OCI-LY7 (cell line): ENCODE measurements at regions of chr6 and their contacts with region 1.

Region 1: GRCh38 chr6:16128759-16129622 is at the start of gene MYLIP:
- DNase-seq: peak; percentile 95
- H3K4me3 ChIP-seq: peak within 1 kb of the TSS; percentile 99
- H3K27ac ChIP-seq: peak within 1 kb of the TSS; percentile 72
- H3K4me1 ChIP-seq: peaks cover 27% of the 10 kb centered on the region
- CTCF ChIP-seq: peak; percentile 74
- total RNA-seq, gene MYLIP: 8.5 and 12.4 TPM in 2 replicates

Region 2: GRCh38 chr6:15662326-15663129 is 466.5 kb before region 1 on chr6 and contains the start of gene DTNBP1:
- CTCF ChIA-PET with region 1: no interaction called
- POLR2A ChIA-PET with region 1: interaction called, 4 read pairs
- intact Hi-C with region 1: loop called (anchors 10 kb)
- DNase-seq: peak; percentile 88
- H3K4me3 ChIP-seq: peak within 1 kb of the TSS; percentile 75
- H3K27ac ChIP-seq: peak within 1 kb of the TSS; percentile 48
- H3K4me1 ChIP-seq: peaks cover 39% of the 10 kb centered on the region
- CTCF ChIP-seq: no peak
- total RNA-seq, gene DTNBP1: 9.8 and 10.9 TPM in 2 replicates

Region 3: DNA sequence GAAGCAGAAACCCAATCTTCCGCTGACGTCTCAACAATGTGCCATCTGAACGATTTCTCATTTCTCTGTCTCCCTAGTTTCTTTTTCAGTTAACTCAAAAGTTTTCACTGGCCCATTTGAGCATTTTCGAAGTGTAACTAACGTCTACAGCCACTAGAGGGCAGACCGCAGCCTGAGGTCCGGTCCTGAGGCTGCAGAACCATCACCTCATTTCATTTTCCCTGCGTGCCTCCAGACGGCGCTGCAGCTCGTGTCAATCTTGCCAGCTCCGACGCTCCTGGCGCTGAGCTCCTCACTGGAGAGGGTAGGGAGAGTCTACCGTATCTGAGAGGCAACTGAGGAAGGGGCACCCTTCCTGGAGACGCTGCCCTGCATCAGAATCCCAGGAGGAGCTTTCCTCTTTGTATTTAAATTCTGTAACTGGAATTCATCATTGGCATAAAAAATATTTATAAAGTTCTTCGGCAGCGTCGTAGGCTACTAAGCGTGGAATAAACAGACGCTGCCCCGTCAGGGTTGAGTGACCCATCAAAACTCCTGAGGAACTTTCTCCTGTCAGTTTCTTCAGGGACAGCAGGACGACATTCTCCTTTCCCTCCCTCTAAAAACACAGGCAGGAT is 437.6 kb before region 1 on chr6:
- CTCF ChIA-PET with region 1: interaction called, 5 read pairs
- POLR2A ChIA-PET with region 1: no interaction called
- intact Hi-C with region 1: loop called (anchors 1 kb)
- DNase-seq: peak; percentile 88
- H3K4me3 ChIP-seq: no peak overlapping the region
- H3K27ac ChIP-seq: no peak overlapping the region
- H3K4me1 ChIP-seq: no peaks in the 10 kb centered on the region
- CTCF ChIP-seq: peak; percentile 99

Region 4: DNA sequence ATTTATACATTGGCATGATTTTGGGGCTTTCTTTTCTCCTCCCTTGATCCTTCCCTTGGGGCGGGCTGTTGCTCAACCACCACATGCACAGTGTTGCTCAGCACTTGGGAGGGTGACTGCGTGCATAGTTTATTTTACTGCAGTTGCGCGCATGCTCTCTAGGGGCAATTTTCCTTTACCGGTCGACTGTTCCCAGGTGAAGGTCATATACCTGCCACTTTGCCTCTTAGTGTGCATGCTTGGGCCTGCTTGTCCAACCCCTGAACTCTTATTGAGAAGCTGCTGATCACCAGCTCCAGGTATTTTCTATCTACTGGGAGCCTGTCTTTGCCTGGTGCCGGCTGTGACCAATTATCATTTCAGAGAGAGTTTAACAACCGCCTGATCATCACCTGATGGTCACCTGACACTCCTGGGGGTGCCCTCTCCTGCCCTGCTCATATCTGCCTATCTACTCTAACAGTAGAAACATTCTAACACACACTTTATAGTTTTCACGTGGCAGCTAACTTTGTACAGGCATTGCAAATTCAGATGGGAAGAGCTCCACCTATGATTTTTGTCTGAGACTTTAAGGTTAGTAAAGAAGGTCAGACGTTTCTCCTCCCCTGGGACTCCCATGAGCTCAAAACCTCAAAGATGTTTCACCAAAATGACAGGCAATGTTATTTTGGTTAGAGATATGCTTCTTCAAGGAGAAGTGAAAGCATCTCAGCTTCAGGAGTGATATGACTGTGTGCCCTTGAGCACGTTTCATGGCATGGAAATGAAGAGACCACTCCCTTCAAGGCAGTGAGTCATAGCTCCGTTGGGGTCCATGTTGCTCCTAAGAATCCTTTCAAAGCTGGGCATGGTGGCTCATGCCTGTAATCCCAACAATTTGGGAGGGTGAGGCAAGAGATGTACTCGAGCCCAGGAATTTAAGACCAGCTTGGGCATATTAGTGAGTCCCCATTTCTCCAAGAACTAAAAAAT is 227.6 kb before region 1 on chr6:
- CTCF ChIA-PET with region 1: no interaction called
- POLR2A ChIA-PET with region 1: interaction called, 4 read pairs
- intact Hi-C with region 1: loop called (anchors 1 kb)
- DNase-seq: peak; percentile 90
- H3K4me3 ChIP-seq: peak overlapping the region; percentile 32
- H3K27ac ChIP-seq: peak overlapping the region; percentile 83
- H3K4me1 ChIP-seq: peaks cover 71% of the 10 kb centered on the region
- CTCF ChIP-seq: no peak; the same call in 1 of the 2 replicates

Region 5: GRCh38 chr6:16146527-16146955 is 17.6 kb after region 1 on chr6:
- CTCF ChIA-PET with region 1: interaction called, 7 read pairs
- POLR2A ChIA-PET with region 1: interaction called, 10 read pairs
- intact Hi-C with region 1: no loop called
- DNase-seq: no peak
- H3K4me3 ChIP-seq: no peak overlapping the region
- H3K27ac ChIP-seq: no peak overlapping the region
- H3K4me1 ChIP-seq: no peaks in the 10 kb centered on the region
- CTCF ChIP-seq: no peak

Region 6: GRCh38 chr6:16206595-16207037 is 77.6 kb after region 1 on chr6:
- CTCF ChIA-PET with region 1: no interaction called
- POLR2A ChIA-PET with region 1: interaction called, 5 read pairs
- intact Hi-C with region 1: loop called (anchors 1 kb)
- DNase-seq: peak; percentile 75
- H3K4me3 ChIP-seq: peak overlapping the region; percentile 27
- H3K27ac ChIP-seq: peak overlapping the region; percentile 87
- H3K4me1 ChIP-seq: peaks cover 28% of the 10 kb centered on the region
- CTCF ChIP-seq: peak; percentile 99